KBM-7 (cell line): ENCODE measurements at regions of chr1 and their contacts with region 1.

Region 1: GRCh38 chr1:115112496-115113375 is 23.4 kb upstream of the TSPAN2 start:
- DNase-seq: peak; percentile 56

Region 2: GRCh38 chr1:114575532-114575931 is 537.2 kb before region 1 on chr1:
- in situ Hi-C with region 1: no loop called
- DNase-seq: no peak

Region 3: DNA sequence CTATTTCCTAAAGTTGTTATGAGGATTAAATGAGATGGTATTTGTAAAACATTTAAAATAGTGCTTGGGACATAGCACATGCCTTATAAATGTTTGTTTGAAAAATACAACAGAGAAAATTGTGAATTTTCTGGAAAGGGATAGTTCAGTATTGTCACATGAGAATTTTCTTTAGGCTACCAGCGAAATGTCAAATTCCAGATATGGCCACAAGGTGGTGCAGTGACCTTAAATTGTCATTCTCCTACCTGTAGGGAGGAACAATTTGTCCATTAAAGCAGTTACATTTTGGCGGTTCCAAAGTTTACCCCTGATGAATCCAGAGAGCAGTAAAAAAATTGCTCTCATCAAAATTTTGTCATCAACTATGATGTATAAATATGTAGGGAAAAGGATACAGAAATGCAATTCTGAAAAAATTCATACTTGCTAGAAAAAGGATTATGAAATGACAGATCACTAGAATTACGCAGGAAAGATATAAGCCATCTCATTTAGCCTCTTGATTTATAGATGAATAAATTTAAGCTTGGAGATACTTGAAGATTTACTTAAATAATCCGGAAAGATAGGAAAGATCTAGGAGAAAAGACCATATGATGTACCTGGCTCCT is 133.4 kb before region 1 on chr1:
- in situ Hi-C with region 1: loop called (anchors 25 kb)
- DNase-seq: peak; percentile 68